ENCODE measurements at regions of chr5 and their contacts with region 1.

Region 1: DNA sequence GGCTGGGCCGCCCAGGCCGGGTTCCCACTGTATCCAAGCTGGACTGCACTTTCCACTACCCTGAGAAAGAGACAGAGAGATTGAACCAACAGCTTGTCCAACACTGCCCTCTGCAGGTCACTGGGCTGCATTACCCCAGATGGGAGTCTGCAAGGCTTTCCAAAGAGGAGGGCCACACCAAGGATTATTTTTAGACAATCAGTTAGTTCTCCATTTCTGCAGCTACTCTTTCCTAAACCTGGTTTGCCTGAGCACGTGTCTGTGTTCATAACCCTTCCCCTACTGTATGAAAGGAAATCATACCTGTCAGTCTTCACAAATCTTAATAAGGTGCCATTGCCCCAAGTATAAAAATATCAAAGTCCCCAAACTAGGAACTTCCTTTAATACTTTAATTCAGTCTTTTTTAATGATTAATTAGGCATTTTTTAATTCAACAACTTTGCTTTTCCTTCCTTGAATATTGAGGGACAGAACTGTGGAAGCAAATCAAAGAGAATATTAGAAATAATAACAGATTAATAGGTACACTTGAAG is 13.4 kb upstream of the FGF1 start:
- DNase-seq: peak; percentile 92
- ATAC-seq: peak; percentile 86

Region 2: DNA sequence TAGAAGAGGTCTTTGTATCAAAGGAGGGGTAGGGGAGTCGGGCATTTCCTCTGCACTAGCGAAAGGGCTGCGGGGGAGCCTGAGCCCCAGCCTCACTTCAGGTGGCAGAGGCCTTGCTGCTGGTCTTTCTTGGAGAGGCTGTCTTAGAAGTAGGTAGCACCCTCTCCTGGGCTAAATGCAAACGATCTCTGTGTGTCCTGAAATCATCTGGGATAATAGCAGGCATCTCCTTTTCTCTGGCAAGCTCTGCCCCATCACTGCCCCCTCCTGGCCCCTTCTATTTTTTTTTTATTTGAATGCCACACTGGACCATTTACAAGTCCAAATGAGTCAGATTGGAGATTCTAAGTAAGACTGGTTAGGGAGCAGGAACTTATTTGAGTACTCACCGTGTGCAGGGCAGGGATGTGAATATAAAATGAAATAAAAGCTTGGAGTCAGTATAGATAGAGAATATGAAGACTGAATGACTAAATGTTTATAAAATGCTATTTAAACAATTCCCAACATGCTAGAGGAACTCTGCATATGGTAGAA is 150.4 kb before region 1 on chr5:
- intact Hi-C with region 1: no loop called
- DNase-seq: no peak
- ATAC-seq: peak; percentile 91

Region 3: GRCh38 chr5:142611154-142611553 is 88.1 kb before region 1 on chr5:
- intact Hi-C with region 1: loop called (anchors 2 kb)
- DNase-seq: peak; percentile 80
- ATAC-seq: peak; percentile 89

Region 4: GRCh38 chr5:142655339-142656267 is 43.6 kb before region 1 on chr5:
- intact Hi-C with region 1: loop called (anchors 5 kb)
- DNase-seq: peak; percentile 94
- ATAC-seq: peak; percentile 93